WTC11 (cell line): ENCODE measurements at regions of chr16 and their contacts with region 1.

Region 1: DNA sequence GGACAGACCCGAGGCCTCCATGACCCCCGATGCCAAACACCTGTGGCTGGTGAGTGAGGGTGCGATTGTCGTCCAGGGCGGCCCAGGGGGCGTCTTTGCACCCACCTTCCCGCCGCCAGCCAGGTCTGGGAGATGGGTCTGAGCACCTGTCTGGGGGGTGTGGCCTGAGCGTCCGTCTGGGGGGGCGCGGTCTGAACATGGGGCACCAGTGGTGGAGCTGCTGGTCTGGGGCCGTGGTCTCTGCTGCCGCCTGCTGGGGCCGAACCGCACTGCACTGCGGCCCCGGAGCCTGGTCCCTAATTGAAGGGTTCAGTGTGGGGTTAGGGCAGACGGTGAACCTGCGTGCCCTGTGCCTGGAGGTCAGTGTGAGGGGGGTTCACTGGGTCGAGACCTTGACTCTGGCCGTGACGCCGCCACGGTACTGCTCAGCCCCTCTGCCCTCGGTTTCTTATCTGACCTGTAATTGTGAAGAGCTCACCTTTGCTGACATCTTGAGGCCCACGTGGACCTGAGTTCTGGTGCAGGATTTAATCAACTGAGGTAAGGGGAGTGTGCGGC is 12.6 kb upstream of the TCF25 start:
- DNase-seq: peak; percentile 91
- ATAC-seq: peak; percentile 98
- H3K4me3 Mint-ChIP-seq: no peak overlapping the region
- H3K27ac Mint-ChIP-seq: no peak overlapping the region
- H3K4me1 Mint-ChIP-seq: no peaks in the 10 kb centered on the region
- H3K27me3 Mint-ChIP-seq: no peaks in the 10 kb centered on the region
- CTCF ChIP-seq: peak; percentile 99

Region 2: DNA sequence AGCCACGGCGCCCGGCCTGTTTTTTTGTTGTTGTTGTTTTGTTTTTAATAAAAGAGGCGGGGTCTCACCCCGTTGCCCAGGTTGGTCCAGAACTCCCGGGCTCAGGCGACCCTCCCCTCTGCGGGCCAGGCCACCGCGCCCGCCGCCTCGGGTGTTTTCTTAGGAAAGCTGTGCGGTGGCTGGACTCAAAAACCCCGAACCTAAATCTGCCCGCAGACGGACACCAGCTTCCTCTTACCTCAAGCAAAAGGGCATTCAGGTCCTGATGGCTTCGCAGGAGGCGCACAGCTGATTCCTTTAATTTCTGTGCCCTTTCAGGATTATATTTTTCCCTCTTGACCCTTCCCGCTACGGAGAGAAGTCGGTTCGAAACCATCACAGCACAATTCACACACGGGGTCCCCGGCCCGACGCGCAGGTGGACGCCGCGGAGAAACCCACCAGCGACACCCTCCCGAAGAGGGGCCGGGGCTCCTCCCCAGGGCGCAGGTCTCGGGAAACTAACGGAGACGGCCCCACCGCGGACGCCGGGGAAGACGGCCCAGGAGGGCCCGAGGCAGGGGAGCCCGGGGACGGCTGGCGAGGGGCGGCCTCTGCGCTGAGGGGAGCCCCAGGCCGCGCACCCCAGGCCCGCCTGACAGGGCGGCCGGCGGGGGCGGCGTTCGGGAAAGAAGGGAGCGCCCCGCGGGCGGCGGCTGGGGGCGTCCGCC is 45.0 kb before region 1 on chr16:
- CTCF ChIA-PET with region 1: interaction called, 22 read pairs
- POLR2A ChIA-PET with region 1: no interaction called
- DNase-seq: no peak
- ATAC-seq: peak; percentile 3; the same call in 1 of the 2 replicates
- H3K4me3 Mint-ChIP-seq: peak overlapping the region; percentile 85
- H3K27ac Mint-ChIP-seq: no peak overlapping the region
- H3K4me1 Mint-ChIP-seq: peaks cover 29% of the 10 kb centered on the region
- H3K27me3 Mint-ChIP-seq: peaks cover 4% of the 10 kb centered on the region
- CTCF ChIP-seq: no peak

Region 3: GRCh38 chr16:89845417-89845816 is 15.4 kb before region 1 on chr16:
- CTCF ChIA-PET with region 1: interaction called, 14 read pairs
- POLR2A ChIA-PET with region 1: no interaction called
- DNase-seq: no peak
- ATAC-seq: no peak
- H3K4me3 Mint-ChIP-seq: no peak overlapping the region
- H3K27ac Mint-ChIP-seq: no peak overlapping the region
- H3K4me1 Mint-ChIP-seq: peaks cover 3% of the 10 kb centered on the region; the same call in 1 of the 2 replicates
- H3K27me3 Mint-ChIP-seq: no peaks in the 10 kb centered on the region
- CTCF ChIP-seq: no peak

Region 4: DNA sequence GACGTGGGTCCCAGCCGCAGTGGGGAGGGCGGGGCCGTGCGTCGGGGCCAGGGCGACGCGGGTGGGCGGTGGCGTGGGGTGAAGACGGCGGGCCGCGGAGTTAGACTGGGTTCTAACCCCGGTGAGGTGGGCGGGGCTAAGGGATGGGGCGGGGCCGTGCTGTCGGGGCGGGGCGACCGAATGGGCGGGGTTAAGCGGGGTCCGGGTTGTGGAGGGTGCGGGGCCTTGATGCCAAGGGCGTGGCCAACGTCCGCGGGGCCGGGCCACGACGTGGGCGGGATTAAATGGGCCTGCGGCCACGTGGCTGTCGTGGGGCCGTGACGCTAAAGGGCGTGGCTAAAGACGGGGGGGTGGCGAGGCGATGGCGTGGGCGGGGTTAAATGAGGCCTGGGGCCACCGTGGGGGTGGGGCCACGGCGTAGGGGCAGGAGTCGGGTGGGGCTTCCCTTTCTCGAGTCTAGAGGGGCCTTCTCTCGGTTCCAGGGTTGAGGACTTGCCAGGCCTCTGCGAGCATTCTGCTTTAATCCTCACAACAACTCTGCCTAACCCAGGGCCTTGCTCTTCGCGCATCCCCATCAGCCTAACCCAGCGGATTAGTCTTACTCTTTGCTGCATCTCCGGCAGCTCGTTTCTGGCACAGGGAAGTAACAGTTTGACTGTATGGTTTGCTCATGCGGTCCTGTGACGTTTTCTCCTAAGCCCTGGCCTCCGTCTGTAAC is 13.3 kb after region 1 on chr16:
- CTCF ChIA-PET with region 1: interaction called, 19 read pairs
- POLR2A ChIA-PET with region 1: interaction called, 3 read pairs
- DNase-seq: peak; percentile 95
- ATAC-seq: peak; percentile 88
- H3K4me3 Mint-ChIP-seq: peak overlapping the region; percentile 82
- H3K27ac Mint-ChIP-seq: peak overlapping the region; percentile 95
- H3K4me1 Mint-ChIP-seq: no peaks in the 10 kb centered on the region
- H3K27me3 Mint-ChIP-seq: peaks cover 4% of the 10 kb centered on the region; the same call in 1 of the 2 replicates
- CTCF ChIP-seq: no peak

Region 5: DNA sequence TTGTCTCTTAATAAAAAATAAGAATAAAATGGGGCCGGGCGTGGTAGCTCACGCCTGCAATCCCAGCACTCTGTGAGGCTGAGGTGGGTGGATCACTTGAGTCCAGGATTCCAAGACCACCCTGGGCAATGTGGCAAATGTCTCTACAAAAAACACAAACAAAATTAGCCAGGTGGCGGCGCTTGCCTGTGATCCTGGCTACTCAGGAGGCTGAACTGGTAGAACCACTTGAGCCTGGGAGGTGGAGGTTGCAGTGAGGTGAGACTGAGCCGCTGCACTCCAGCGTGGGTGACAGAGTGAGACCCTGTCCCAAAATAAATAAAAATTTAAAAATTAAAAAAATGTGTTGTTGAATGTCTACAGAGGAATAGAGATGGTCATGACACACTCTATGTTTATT is 84.8 kb after region 1 on chr16:
- CTCF ChIA-PET with region 1: no interaction called
- POLR2A ChIA-PET with region 1: no interaction called
- DNase-seq: peak; percentile 43
- ATAC-seq: peak; percentile 5; the same call in 1 of the 2 replicates
- H3K4me3 Mint-ChIP-seq: no peak overlapping the region
- H3K27ac Mint-ChIP-seq: no peak overlapping the region
- H3K4me1 Mint-ChIP-seq: peaks cover 6% of the 10 kb centered on the region; the same call in 1 of the 2 replicates
- H3K27me3 Mint-ChIP-seq: peaks cover 49% of the 10 kb centered on the region
- CTCF ChIP-seq: no peak